ENCODE measurements at regions of chr13 and their contacts with region 1.

Region 1: DNA sequence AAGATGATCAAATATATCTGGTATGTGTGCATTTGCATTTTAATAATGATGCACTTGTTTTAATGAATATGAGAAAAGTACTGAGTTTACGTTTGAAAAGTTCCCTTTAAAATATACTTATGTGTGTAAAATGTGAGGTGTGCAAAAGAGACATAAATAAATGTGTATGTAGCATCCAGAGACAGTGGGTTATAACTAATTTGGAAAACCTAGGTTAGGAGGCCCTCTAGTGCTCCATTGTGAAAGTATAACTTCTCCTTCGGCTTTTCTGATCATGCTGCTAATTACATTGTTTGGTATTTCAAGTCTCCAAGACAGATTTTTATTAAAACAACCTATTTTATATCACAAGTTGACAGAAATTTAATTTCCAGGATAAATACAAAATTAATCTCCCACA is 30.1 kb downstream of the SCEL start:
- DNase-seq: peak; percentile 79
- H3K4me3 ChIP-seq: no peak overlapping the region
- H3K27ac ChIP-seq: no peak overlapping the region
- H3K4me1 ChIP-seq: peaks cover 4% of the 10 kb centered on the region
- H3K27me3 ChIP-seq: no peaks in the 10 kb centered on the region
- CTCF ChIP-seq: peak; percentile 77

Region 2: GRCh38 chr13:77026818-77027585 is 538.6 kb before region 1 on chr13 and contains the start of gene FBXL3:
- CTCF ChIA-PET with region 1: no interaction called
- POLR2A ChIA-PET with region 1: no interaction called
- intact Hi-C with region 1: loop called (anchors 10 kb)
- DNase-seq: peak; percentile 87
- H3K4me3 ChIP-seq: peak within 1 kb of the TSS; percentile 87
- H3K27ac ChIP-seq: peak within 1 kb of the TSS; percentile 92
- H3K4me1 ChIP-seq: peaks cover 15% of the 10 kb centered on the region
- H3K27me3 ChIP-seq: no peaks in the 10 kb centered on the region
- CTCF ChIP-seq: no peak
- total RNA-seq, gene FBXL3: 24.1 and 29.2 TPM in 2 replicates

Region 3: DNA sequence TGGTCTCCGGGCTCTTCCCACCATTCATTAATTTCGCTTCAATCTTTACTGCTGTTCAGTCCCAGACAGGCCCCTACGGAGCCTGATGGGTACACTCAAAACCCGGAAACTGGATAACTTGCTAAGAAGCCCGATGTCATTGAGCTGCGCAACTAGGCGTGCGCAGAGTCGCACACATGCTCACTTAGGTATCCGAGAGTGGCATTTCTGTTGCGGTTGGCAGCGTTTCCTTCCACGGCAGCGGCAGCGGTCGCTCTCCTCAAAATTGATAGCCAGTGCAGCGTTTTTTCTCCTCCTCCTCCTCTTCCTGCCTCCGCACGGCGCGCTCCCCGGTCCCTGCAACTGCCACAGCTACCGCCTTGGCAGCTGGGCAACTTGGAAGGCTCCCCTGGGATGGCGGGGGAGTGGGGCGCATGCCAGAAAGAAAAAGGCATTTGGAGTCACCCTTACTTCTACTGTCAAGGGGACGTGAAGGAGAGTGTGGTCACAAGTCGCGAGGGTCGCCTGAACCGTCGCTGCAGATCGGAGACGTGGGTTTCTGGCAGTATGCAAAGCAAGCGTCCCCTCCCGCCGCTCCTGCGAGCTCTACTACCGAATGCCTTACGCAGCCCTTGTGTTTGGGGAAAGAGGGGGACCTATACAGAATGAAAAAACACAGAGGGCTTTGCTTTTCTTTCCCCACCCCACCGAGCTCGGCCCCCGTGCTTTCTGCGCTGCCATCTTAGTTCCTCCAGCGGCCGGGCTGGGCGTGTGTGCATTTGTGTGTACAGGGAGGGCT is 236.3 kb before region 1 on chr13:
- CTCF ChIA-PET with region 1: no interaction called
- POLR2A ChIA-PET with region 1: no interaction called
- intact Hi-C with region 1: loop called (anchors 5 kb)
- DNase-seq: peak; percentile 97
- H3K4me3 ChIP-seq: peak overlapping the region; percentile 80
- H3K27ac ChIP-seq: peak overlapping the region; percentile 89
- H3K4me1 ChIP-seq: peaks cover 20% of the 10 kb centered on the region
- H3K27me3 ChIP-seq: no peaks in the 10 kb centered on the region
- CTCF ChIP-seq: no peak

Region 4: DNA sequence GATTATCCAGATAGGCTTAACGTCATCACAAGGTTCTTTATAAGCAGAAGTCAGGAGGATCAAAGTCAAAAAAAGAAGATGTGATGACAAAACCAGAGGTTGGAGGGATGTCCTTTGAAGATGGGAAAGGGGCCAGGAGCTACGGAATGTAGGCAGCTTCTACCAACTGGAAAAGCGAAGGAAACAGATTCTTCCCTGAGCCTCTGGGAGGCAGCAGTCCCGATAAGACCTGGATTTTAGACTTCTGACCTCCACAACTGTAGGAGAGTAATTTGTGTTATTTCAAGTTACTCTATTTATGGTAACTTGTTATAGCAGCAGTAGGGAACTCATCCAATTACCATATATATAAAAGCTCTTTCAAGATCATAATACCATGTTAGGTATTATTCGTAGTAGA is 139.9 kb before region 1 on chr13:
- CTCF ChIA-PET with region 1: no interaction called
- POLR2A ChIA-PET with region 1: no interaction called
- intact Hi-C with region 1: no loop called
- DNase-seq: no peak
- H3K4me3 ChIP-seq: no peak overlapping the region
- H3K27ac ChIP-seq: no peak overlapping the region
- H3K4me1 ChIP-seq: no peaks in the 10 kb centered on the region
- H3K27me3 ChIP-seq: no peaks in the 10 kb centered on the region
- CTCF ChIP-seq: no peak

Region 5: GRCh38 chr13:77480066-77480465 is 85.6 kb before region 1 on chr13:
- CTCF ChIA-PET with region 1: interaction called, 4 read pairs
- POLR2A ChIA-PET with region 1: interaction called, 17 read pairs
- intact Hi-C with region 1: loop called (anchors 5 kb)
- DNase-seq: peak; percentile 8
- H3K4me3 ChIP-seq: no peak overlapping the region
- H3K27ac ChIP-seq: no peak overlapping the region
- H3K4me1 ChIP-seq: peaks cover 6% of the 10 kb centered on the region
- H3K27me3 ChIP-seq: peaks cover 2% of the 10 kb centered on the region
- CTCF ChIP-seq: no peak

Region 6: DNA sequence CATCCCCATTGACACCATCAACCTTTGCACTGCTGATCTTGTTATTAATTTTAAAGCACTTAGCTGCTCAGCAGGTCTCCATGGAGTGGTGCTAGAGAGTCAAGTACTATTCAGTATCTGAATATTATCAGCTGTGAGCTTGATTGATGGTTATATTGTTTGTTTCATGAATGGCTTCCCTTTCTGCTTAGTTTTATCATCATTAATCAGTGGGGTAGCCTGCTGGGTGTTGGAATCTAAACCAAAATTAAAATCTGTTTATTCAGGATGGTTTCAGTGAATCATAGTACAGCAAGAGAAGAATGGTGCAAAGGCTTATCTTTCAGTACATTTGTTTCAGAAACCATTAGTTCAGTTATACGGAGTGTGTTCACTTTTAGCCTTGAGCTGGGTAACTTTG is 72.7 kb before region 1 on chr13:
- CTCF ChIA-PET with region 1: interaction called, 5 read pairs
- POLR2A ChIA-PET with region 1: no interaction called
- intact Hi-C with region 1: loop called (anchors 1 kb)
- DNase-seq: peak; percentile 89
- H3K4me3 ChIP-seq: no peak overlapping the region
- H3K27ac ChIP-seq: no peak overlapping the region
- H3K4me1 ChIP-seq: peaks cover 7% of the 10 kb centered on the region
- H3K27me3 ChIP-seq: peaks cover 80% of the 10 kb centered on the region
- CTCF ChIP-seq: peak; percentile 61

Region 7: DNA sequence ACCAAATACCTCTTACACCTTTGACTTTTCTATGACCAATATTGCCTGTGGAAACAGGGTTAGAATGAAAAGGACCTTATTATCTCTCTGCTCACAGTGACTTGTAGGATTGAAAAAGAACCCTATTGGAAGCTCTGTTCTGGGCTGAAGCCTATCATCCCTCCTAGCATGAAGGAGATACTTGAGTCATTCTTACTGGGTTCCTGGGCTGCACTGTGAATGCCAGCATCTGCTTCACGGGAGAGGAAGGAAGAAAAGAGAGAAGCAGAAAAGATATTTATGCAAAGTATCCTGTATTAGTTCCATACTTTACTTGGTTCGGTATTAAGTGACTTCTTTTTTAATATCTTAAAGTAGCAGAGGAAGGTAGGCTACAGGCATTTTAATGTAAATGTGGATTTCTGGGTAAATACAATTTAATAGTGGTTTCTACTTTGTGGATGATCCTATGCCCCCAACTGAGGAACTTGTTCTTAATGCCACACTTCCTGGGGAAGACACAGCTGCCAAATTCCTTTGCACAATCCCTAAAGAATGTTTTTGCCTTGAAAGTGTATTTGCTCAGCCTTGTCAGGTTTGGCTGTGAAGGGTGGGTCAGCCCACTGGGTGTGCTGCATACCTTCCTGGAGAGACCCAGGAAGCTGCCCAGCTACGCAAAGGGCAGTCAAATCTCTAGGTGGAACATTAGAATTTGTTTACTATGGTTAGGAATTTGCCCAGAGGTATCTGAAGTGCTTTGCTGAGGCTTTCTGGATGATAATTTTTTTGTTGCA is 43.9 kb before region 1 on chr13:
- CTCF ChIA-PET with region 1: interaction called, 8 read pairs
- POLR2A ChIA-PET with region 1: no interaction called
- intact Hi-C with region 1: loop called (anchors 1 kb)
- DNase-seq: peak; percentile 92
- H3K4me3 ChIP-seq: no peak overlapping the region
- H3K27ac ChIP-seq: peak overlapping the region; percentile 63
- H3K4me1 ChIP-seq: peaks cover 47% of the 10 kb centered on the region
- H3K27me3 ChIP-seq: no peaks in the 10 kb centered on the region
- CTCF ChIP-seq: peak; percentile 32; the same call in 1 of the 2 replicates

Region 8: DNA sequence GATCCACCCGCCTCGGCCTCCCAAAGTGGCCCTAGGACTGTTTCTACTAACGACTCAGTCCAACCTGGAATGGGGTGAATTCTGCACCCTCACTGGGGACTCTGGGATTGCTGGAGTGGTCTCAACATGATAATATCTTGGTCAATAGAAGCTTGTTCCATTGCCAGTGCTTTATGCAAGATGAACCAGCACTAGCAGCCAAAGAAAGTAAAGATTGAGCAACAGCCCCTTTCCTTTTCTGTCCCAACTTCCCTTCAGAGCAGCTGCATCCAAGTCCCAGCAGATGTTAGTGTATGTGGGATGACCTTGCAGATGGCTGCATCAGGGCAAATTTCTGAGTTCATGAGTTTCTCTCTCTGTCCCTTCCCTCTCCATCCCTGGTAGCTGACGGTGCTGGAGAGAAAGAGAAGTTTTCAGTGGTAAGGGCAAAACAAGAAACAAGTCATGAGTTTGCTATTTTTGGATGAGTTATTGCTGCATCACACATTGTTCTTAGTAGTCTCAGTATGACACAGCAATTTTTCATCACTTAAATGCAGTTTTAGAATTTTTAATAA is 536.6 kb after region 1 on chr13:
- CTCF ChIA-PET with region 1: no interaction called
- POLR2A ChIA-PET with region 1: no interaction called
- intact Hi-C with region 1: no loop called
- DNase-seq: no peak
- H3K4me3 ChIP-seq: no peak overlapping the region
- H3K27ac ChIP-seq: no peak overlapping the region
- H3K4me1 ChIP-seq: no peaks in the 10 kb centered on the region
- H3K27me3 ChIP-seq: no peaks in the 10 kb centered on the region
- CTCF ChIP-seq: no peak